H1 (cell line): ENCODE measurements at regions of chr22 and their contacts with region 1.

Region 1: DNA sequence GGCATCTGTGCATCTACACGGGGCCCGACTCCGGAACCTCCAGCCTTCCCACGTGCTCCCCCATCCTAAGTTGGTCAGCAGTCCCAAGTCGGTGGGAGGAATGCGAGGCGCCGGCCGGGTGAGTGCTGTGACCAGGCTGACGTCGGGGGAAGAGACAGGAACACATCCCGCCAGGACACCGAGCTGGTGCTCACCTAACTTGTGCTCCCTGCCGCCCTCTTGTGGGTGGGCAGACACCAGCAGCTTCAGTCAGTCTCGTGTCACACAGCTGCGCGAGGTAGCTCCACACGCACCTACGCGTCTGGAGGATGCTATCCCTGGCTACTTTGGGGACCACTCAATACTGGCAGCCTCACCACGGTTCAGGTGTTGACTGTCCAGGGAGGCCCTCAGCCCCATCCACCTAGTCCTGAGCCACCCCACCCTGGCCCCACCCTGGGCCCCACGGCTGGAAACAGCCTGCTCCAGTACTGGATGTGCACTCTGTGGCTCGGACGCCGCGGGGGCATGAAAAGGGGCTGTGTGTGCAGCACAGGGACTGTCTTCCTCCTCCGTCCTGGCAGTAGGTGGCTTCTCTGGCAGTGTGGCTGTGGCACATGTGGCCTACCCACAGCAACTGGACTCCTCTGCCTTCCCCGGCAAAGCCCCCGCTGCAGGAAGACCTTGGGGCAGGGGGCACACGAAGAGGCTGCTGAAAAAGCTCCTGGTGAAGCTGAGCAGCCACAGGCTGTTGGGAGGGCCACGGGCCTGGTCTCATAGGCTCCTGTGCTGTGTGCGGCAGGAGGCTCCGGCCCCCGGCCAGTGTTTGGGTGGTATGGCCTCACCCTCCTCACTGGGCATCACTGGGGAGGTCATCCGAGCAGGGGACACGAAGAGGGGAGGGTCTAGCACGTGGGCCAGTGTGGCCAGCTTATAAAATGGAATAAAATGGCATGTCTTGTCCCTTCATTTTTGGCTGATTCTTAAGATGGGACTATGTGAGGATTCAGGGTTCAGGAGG is 11.2 kb upstream of the BID start:
- DNase-seq: peak; percentile 74 to 96
- H3K4me3 ChIP-seq: no peak overlapping the region
- H3K27ac ChIP-seq: no peak overlapping the region
- H3K4me1 ChIP-seq: peaks cover 0 to 5% (median under 1%) of the 10 kb centered on the region in 4 experiments; a peak in 1 of 7 replicates
- H3K27me3 ChIP-seq: no peaks in the 10 kb centered on the region
- CTCF ChIP-seq: peak; percentile 89 to 99 (median 98)
- EP300 ChIP-seq: no peak
- POLR2A ChIP-seq: no peak
- RAD21 ChIP-seq: peak; percentile 74 to 79

Region 2: DNA sequence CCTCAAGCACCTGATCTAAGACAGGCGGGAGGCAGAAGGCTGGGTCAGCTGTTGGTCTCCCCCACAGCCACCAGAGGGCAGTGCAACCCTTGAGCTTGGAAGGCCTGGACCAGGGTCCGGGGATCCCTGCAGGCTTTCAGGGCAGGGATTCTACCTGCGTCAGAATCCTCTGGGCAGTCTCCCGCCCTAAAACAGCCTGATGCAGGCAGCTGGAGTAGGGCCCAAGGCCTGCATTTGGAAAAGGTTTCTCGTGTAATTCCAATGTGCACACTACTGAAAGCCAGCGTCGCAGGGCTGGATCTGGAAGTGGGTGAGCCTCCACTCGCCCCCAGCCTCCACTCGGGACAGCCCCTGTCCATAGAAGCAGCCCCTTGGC is 43.0 kb before region 1 on chr22:
- CTCF ChIA-PET with region 1: interaction called, 174 read pairs
- POLR2A ChIA-PET with region 1: interaction called, 3 read pairs
- DNase-seq: peak; percentile 80 to 96
- H3K4me3 ChIP-seq: no peak overlapping the region
- H3K27ac ChIP-seq: no peak overlapping the region
- H3K4me1 ChIP-seq: peaks cover 0 to 7% (median 4%) of the 10 kb centered on the region in 4 experiments; a peak in 5 of 7 replicates
- H3K27me3 ChIP-seq: no peaks in the 10 kb centered on the region
- CTCF ChIP-seq: peak; percentile 90 to 98 (median 96)
- EP300 ChIP-seq: peak in 1 of 2 experiments; percentile 64; a peak in 1 of 3 replicates
- POLR2A ChIP-seq: no peak
- RAD21 ChIP-seq: peak; percentile 94 to 97

Region 3: DNA sequence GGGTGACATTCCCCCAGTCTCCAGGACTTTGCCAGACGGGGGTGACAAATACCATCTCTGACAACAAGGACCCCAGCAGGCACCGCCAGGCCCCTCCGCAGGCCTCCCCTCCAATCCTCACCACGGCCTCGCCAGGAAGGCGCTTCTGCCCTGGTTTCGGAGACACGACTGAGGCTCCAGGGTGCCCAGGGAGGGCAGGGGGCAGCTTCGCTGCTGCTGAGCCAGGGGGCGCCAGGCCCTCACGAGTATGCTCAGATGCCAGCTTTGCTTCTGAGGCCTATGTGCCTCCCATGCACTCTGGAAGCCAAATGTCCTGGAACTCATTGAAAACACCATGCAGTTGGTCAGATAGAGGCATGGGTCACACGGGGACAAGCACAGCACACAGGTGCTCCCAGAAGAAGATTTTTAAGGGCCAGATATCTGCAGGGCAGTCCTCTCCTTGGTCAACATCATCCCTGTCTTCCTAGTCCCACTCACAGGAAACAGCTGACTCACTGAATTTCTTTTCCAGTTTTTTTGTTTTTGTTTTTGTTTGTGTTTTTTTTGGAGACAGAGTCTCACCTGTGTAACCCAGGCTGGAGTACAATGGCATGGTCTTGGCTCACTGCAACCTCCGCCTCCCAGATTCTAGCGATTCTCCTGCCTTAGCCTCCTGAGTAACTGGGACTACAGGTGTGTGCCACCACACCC is 31.1 kb before region 1 on chr22:
- CTCF ChIA-PET with region 1: interaction called, 93 read pairs
- POLR2A ChIA-PET with region 1: interaction called, 3 read pairs
- DNase-seq: no peak
- H3K4me3 ChIP-seq: no peak overlapping the region
- H3K27ac ChIP-seq: no peak overlapping the region
- H3K4me1 ChIP-seq: no peaks in the 10 kb centered on the region; a peak in 1 of 7 replicates
- H3K27me3 ChIP-seq: no peaks in the 10 kb centered on the region
- CTCF ChIP-seq: peak; percentile 73 to 85 (median 82)
- EP300 ChIP-seq: no peak
- POLR2A ChIP-seq: no peak
- RAD21 ChIP-seq: peak; percentile 86 to 89

Region 4: DNA sequence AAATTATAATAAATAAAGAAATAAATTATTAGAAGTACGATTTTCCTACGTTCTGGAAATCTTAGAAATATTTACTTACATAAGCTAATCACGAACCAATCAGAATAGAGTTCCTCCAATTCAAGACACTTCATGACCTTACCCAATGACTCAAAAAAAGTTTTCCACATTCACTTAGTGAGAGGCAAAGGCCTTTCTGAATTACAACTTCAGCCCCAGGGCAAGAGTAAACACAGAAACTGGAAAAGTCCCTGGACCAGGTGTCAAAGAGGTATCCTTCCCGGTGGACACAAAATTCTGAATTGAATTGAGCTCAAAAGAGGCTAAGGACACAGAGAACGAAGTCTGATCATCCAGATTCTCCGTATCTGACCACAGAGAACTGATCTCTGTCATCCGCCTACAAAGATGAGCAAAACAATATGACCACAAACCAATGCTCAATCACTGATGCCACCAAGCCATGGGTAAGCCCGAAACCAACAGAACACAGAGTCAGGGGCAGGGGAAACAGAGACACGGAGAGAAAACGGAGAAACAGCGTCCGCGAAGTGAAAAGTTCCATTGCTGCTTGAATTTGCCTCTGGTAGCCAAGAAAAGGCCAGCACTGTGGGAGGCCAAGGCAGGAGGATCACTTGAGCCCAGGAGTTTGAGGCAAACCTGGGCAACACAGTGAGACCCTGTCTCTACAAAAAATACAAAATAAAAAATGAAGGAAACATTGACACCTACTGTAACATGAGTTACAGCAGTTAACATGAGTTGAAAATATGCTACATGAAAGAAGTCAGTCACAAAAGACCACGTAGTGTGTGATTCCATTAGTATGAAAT is 18.0 kb before region 1 on chr22:
- CTCF ChIA-PET with region 1: interaction called, 54 read pairs
- POLR2A ChIA-PET with region 1: interaction called, 38 read pairs
- DNase-seq: no peak
- H3K4me3 ChIP-seq: no peak overlapping the region
- H3K27ac ChIP-seq: no peak overlapping the region
- H3K4me1 ChIP-seq: peaks cover 2 to 6% (median 2%) of the 10 kb centered on the region in 4 experiments; a peak in 4 of 7 replicates
- H3K27me3 ChIP-seq: no peaks in the 10 kb centered on the region
- CTCF ChIP-seq: no peak
- EP300 ChIP-seq: no peak
- POLR2A ChIP-seq: no peak
- RAD21 ChIP-seq: no peak

Region 5: GRCh38 chr22:17773606-17774205 is 11.8 kb before region 1 on chr22:
- CTCF ChIA-PET with region 1: interaction called, 54 read pairs
- POLR2A ChIA-PET with region 1: interaction called, 38 read pairs
- DNase-seq: peak in 1 of 2 experiments; percentile 81
- H3K4me3 ChIP-seq: peak overlapping the region; percentile 51 to 71 (median 62)
- H3K27ac ChIP-seq: peak overlapping the region; percentile 60; the same call in 1 of the 2 replicates
- H3K4me1 ChIP-seq: peaks cover 0 to 20% (median 16%) of the 10 kb centered on the region in 4 experiments; a peak in 6 of 7 replicates
- H3K27me3 ChIP-seq: no peaks in the 10 kb centered on the region
- CTCF ChIP-seq: no peak
- EP300 ChIP-seq: no peak
- POLR2A ChIP-seq: peak in 1 of 2 experiments; percentile 82; a peak in 2 of 3 replicates
- RAD21 ChIP-seq: no peak

Region 6: GRCh38 chr22:17797721-17798559 is 12.5 kb after region 1 on chr22:
- CTCF ChIA-PET with region 1: interaction called, 115 read pairs
- POLR2A ChIA-PET with region 1: interaction called, 3 read pairs
- DNase-seq: no peak
- H3K4me3 ChIP-seq: no peak overlapping the region
- H3K27ac ChIP-seq: no peak overlapping the region
- H3K4me1 ChIP-seq: no peaks in the 10 kb centered on the region
- H3K27me3 ChIP-seq: no peaks in the 10 kb centered on the region
- CTCF ChIP-seq: no peak
- EP300 ChIP-seq: no peak
- POLR2A ChIP-seq: no peak
- RAD21 ChIP-seq: no peak

Region 7: DNA sequence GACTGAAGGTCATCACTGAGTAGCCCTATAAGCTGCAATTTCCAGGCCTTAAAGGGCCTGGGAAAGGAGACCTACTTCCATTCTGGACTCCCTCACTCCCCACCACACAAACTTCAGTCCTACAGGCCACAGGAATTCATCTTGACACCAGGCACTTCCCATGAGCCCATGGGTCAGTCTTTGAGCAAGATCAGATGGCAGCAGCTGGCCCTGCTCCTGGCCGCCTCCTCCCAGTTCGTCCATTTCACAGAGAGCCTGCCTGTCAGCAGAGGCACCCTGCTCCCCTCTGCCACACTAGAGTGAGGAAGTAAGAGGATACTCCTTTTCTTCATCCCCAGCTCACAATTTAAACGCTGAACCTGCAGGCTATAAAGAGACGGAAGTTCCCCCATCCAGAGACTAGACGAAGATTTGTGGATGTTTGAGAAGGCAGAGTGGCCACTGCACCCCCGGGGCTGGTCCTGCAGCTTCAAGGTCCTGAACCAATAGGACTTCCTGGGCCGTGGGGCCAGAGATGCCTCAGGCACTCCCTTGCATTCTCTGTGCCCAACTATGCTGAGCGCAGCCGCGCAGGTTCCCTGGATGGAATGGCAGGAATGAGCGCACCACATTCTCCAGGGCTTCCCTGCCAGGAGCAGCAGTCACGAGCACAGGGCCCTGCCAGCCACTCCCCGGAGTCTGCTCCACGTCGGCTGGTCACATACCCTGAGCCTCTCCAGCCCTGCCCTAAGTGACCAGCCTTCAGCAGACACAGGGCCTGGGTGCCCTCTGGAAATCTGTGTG is 22.3 kb after region 1 on chr22:
- CTCF ChIA-PET with region 1: interaction called, 115 read pairs
- POLR2A ChIA-PET with region 1: no interaction called
- DNase-seq: no peak
- H3K4me3 ChIP-seq: no peak overlapping the region
- H3K27ac ChIP-seq: no peak overlapping the region
- H3K4me1 ChIP-seq: peaks cover 0 to 3% (median 0%) of the 10 kb centered on the region in 4 experiments; a peak in 3 of 7 replicates
- H3K27me3 ChIP-seq: no peaks in the 10 kb centered on the region
- CTCF ChIP-seq: no peak
- EP300 ChIP-seq: no peak
- POLR2A ChIP-seq: no peak
- RAD21 ChIP-seq: no peak